ENCODE measurements at regions of chr5 and their contacts with region 1.

Region 1: GRCh38 chr5:143582869-143583268 is 179.4 kb upstream of the NR3C1 start:
- DNase-seq: no peak
- ATAC-seq: peak; percentile 81
- H3K4me3 ChIP-seq: no peak overlapping the region
- H3K27ac ChIP-seq: no peak overlapping the region
- H3K4me1 ChIP-seq: peaks cover 7% of the 10 kb centered on the region
- H3K27me3 ChIP-seq: no peaks in the 10 kb centered on the region
- CTCF ChIP-seq: no peak
- EP300 ChIP-seq: no peak
- POLR2A ChIP-seq: no peak
- RAD21 ChIP-seq: 0 out of 2 replicates have a peak, but pooled peaks have one; percentile 2

Region 2: GRCh38 chr5:143558048-143558447 is 24.8 kb before region 1 on chr5:
- CTCF ChIA-PET with region 1: interaction called, 4 read pairs
- POLR2A ChIA-PET with region 1: no interaction called
- RAD21 ChIA-PET with region 1: no interaction called
- SMC1A ChIA-PET with region 1: interaction called, 55 read pairs
- in situ Hi-C with region 1: no loop called
- intact Hi-C with region 1: no loop called
- DNase-seq: no peak
- ATAC-seq: peak; percentile 64
- H3K4me3 ChIP-seq: no peak overlapping the region
- H3K27ac ChIP-seq: no peak overlapping the region
- H3K4me1 ChIP-seq: peaks cover 7% of the 10 kb centered on the region; the same call in 1 of the 2 replicates
- H3K27me3 ChIP-seq: no peaks in the 10 kb centered on the region
- CTCF ChIP-seq: no peak
- EP300 ChIP-seq: no peak
- POLR2A ChIP-seq: no peak
- RAD21 ChIP-seq: no peak

Region 3: DNA sequence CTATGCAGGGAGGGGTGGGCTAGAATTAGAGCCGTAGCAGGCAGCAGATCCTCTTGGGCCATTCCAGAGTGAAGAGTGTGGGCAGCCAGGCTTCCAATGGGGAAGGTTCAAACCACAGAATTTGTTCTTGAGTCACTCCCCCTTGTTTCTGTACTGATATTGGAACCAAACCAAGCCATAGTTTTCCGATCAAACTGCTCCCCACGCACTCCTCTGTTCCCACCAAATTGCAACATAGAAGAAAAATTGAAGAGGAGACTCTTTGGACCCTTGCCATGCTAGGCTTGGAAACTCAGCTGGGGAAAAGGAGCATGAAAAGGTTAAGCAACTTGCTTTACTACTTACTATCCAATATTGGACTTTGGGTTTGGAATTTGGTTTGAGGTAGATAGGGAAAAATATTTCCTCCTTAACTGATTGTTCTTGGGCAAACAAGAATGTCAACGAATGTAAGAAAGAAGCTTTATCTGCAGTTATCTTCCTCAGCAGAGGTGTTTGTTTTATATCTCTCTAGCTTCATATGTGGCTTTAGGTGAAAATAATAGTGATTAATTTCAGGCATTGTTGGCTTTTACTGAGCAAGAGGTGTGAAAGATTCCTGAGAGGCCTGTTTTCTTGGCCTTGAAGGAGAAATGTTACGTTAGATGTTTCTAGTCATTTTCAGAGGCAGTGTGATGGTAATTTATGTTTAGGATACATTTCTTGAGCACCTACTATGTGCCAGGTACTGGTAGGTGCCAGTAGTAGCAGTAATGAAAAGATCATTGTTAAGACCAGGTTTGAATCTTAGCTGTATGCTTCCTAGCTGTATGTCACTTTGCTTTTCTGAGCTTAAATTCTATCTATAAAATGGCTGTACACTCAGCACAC is 13.4 kb before region 1 on chr5:
- CTCF ChIA-PET with region 1: interaction called, 18 read pairs
- POLR2A ChIA-PET with region 1: interaction called, 17 read pairs
- RAD21 ChIA-PET with region 1: interaction called, 25 read pairs
- SMC1A ChIA-PET with region 1: interaction called, 56 read pairs
- in situ Hi-C with region 1: no loop called
- intact Hi-C with region 1: loop called (anchors 2 kb)
- DNase-seq: no peak
- ATAC-seq: no peak
- H3K4me3 ChIP-seq: no peak overlapping the region
- H3K27ac ChIP-seq: no peak overlapping the region
- H3K4me1 ChIP-seq: peaks cover 9% of the 10 kb centered on the region
- H3K27me3 ChIP-seq: no peaks in the 10 kb centered on the region
- CTCF ChIP-seq: no peak
- EP300 ChIP-seq: no peak
- POLR2A ChIP-seq: no peak
- RAD21 ChIP-seq: no peak